ENCODE measurements at regions of chr19 and their contacts with region 1.

Region 1: DNA sequence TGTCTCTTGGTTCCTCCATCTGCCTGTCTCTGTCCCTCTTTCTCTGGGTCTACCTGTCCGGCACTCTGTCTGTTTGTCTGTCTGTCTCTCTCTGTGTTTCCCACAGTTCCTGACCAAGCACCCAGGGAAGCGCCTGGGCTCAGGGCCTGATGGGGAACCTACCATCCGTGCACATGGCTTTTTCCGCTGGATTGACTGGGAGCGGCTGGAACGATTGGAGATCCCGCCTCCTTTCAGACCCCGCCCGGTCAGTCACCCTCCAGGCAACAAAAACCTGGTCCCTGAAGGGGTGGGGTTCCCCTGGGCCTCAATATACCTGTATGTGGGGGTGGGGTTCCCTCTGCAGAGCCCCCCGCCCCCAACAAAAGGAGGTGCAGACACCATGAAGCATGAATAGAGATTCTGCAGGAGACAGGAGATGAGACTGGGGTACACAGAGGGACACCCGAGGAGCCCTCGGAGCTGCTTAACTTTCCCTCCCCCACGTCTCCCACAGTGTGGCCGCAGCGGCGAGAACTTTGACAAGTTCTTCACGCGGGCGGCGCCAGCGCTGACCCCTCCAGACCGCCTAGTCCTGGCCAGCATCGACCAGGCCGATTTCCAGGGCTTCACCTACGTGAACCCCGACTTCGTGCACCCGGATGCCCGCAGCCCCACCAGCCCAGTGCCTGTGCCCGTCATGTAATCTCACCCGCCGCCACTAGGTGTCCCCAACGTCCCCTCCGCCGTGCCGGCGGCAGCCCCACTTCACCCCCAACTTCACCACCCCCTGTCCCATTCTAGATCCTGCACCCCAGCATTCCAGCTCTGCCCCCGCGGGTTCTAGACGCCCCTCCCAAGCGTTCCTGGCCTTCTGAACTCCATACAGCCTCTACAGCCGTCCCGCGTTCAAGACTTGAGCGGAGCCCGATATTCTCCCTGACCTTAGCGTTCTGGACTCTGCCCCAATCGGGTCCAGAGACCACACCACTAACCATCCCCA is 2.6 kb upstream of the CACNG7 start:
- DNase-seq: peak; percentile 33
- H3K4me3 ChIP-seq: no peak overlapping the region
- H3K27ac ChIP-seq: no peak overlapping the region
- H3K4me1 ChIP-seq: no peaks in the 10 kb centered on the region
- CTCF ChIP-seq: peak; percentile 86

Region 2: DNA sequence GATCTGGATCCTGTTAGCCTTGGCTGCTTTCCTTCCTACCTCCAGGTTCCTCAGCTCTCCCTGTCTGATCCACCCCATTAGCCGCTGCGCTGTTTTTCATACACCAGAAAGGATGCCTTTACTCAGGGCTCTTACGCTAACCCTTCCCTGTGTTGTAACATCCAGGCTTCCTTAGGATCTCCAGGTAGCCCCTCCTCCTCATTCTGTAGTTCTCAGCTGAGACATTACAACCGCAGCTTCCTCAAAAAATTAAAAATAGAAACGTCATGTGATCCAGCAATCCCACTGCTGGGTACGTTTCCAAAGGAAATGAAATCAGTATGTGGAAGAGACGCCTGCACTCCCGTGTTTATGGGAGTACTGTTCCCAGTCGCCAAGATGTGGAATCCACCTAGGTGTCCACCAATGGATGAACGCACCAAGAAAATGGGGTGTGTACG is 57.2 kb before region 1 on chr19:
- CTCF ChIA-PET with region 1: interaction called, 14 read pairs
- POLR2A ChIA-PET with region 1: no interaction called
- intact Hi-C with region 1: no loop called
- DNase-seq: no peak
- H3K4me3 ChIP-seq: no peak overlapping the region
- H3K27ac ChIP-seq: no peak overlapping the region
- H3K4me1 ChIP-seq: peaks cover 10% of the 10 kb centered on the region
- CTCF ChIP-seq: no peak

Region 3: DNA sequence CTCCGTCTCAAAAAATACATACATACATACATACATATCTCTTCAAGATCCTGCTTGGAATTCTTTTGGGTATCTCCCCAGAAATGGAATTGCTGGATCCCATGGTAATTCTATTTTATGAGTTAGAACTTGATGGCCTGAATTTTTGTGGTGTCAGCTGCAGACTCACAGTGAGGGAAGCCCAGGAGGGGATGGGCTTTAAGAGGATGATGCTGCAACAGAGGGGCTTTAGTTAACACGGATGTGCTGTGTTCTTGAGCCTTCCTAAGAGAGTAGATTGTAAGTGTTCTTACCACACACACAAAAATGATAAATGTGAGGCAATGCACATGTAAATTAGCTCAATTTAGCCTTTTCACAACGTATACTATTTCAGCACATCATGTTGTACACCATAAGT is 116.7 kb after region 1 on chr19:
- CTCF ChIA-PET with region 1: no interaction called
- POLR2A ChIA-PET with region 1: no interaction called
- intact Hi-C with region 1: loop called (anchors 5 kb)
- DNase-seq: no peak
- H3K4me3 ChIP-seq: no peak overlapping the region
- H3K27ac ChIP-seq: no peak overlapping the region
- H3K4me1 ChIP-seq: peaks cover 4% of the 10 kb centered on the region
- CTCF ChIP-seq: no peak